IMR-90 (cell line): ENCODE measurements at regions of chr12 and their contacts with region 1.

Region 1: GRCh38 chr12:64610149-64610678 is at the start of gene RASSF3:
- DNase-seq: peak; percentile 67
- ATAC-seq: peak; percentile 85
- H3K4me3 ChIP-seq: peak within 1 kb of the TSS; percentile 84
- H3K27ac ChIP-seq: peak within 1 kb of the TSS; percentile 86
- H3K4me1 ChIP-seq: peaks cover 2% of the 10 kb centered on the region; the same call in 1 of the 2 replicates
- H3K27me3 ChIP-seq: no peaks in the 10 kb centered on the region
- CTCF ChIP-seq: no peak
- POLR2A ChIP-seq: no peak; the same call in 1 of the 2 replicates
- RAD21 ChIP-seq: no peak
- total RNA-seq, gene RASSF3: 21.4 and 39.3 TPM in 2 replicates

Region 2: GRCh38 chr12:64550755-64551154 is 59.5 kb before region 1 on chr12:
- CTCF ChIA-PET with region 1: interaction called, 6 read pairs
- POLR2A ChIA-PET with region 1: no interaction called
- dilution Hi-C with region 1: no loop called
- in situ Hi-C with region 1: no loop called
- intact Hi-C with region 1: loop called (anchors 1 kb)
- DNase-seq: no peak
- ATAC-seq: no peak
- H3K4me3 ChIP-seq: no peak overlapping the region
- H3K27ac ChIP-seq: no peak overlapping the region
- H3K4me1 ChIP-seq: no peaks in the 10 kb centered on the region
- H3K27me3 ChIP-seq: no peaks in the 10 kb centered on the region
- CTCF ChIP-seq: no peak
- POLR2A ChIP-seq: no peak
- RAD21 ChIP-seq: no peak

Region 3: GRCh38 chr12:64560396-64561304 is 49.6 kb before region 1 on chr12:
- CTCF ChIA-PET with region 1: interaction called, 5 read pairs
- POLR2A ChIA-PET with region 1: interaction called, 6 read pairs
- dilution Hi-C with region 1: no loop called
- in situ Hi-C with region 1: loop called (anchors 5 kb)
- intact Hi-C with region 1: loop called (anchors 1 kb)
- DNase-seq: peak; percentile 100
- ATAC-seq: peak; percentile 98
- H3K4me3 ChIP-seq: no peak overlapping the region
- H3K27ac ChIP-seq: peak overlapping the region; percentile 51; the same call in 1 of the 2 replicates
- H3K4me1 ChIP-seq: peaks cover 14% of the 10 kb centered on the region
- H3K27me3 ChIP-seq: no peaks in the 10 kb centered on the region
- CTCF ChIP-seq: no peak
- POLR2A ChIP-seq: no peak
- RAD21 ChIP-seq: no peak

Region 4: GRCh38 chr12:64669270-64669842 is 59.1 kb after region 1 on chr12:
- CTCF ChIA-PET with region 1: no interaction called
- POLR2A ChIA-PET with region 1: no interaction called
- dilution Hi-C with region 1: no loop called
- in situ Hi-C with region 1: no loop called
- intact Hi-C with region 1: loop called (anchors 5 kb)
- DNase-seq: peak; percentile 11
- ATAC-seq: no peak
- H3K4me3 ChIP-seq: no peak overlapping the region
- H3K27ac ChIP-seq: no peak overlapping the region
- H3K4me1 ChIP-seq: peaks cover 32% of the 10 kb centered on the region
- H3K27me3 ChIP-seq: no peaks in the 10 kb centered on the region
- CTCF ChIP-seq: no peak
- POLR2A ChIP-seq: no peak
- RAD21 ChIP-seq: no peak

Region 5: GRCh38 chr12:64696080-64696741 is 86.0 kb after region 1 on chr12:
- CTCF ChIA-PET with region 1: interaction called, 3 read pairs
- POLR2A ChIA-PET with region 1: interaction called, 5 read pairs
- dilution Hi-C with region 1: no loop called
- in situ Hi-C with region 1: no loop called
- intact Hi-C with region 1: loop called (anchors 1 kb)
- DNase-seq: peak; percentile 43
- ATAC-seq: peak; percentile 15; the same call in 1 of the 2 replicates
- H3K4me3 ChIP-seq: no peak overlapping the region
- H3K27ac ChIP-seq: no peak overlapping the region
- H3K4me1 ChIP-seq: peaks cover 3% of the 10 kb centered on the region
- H3K27me3 ChIP-seq: no peaks in the 10 kb centered on the region
- CTCF ChIP-seq: peak; percentile 54
- POLR2A ChIP-seq: no peak
- RAD21 ChIP-seq: peak; percentile 63